Activated naive CD4-positive, alpha-beta T cell treated with anti-CD3 and anti-CD28 coated beads for 36 hours (primary cell): ENCODE measurements at regions of chr11 and their contacts with region 1.

Region 1: GRCh38 chr11:121292495-121293287 is at the start of gene SC5D:
- DNase-seq: peak; percentile 97
- H3K4me3 Mint-ChIP-seq: peak within 1 kb of the TSS; percentile 90
- H3K27ac Mint-ChIP-seq: peak within 1 kb of the TSS; percentile 95
- H3K4me1 Mint-ChIP-seq: peaks cover 32% of the 10 kb centered on the region
- H3K27me3 Mint-ChIP-seq: no peaks in the 10 kb centered on the region
- total RNA-seq, gene SC5D: 29.6 to 31.7 TPM

Region 2: GRCh38 chr11:121309688-121310087 is 17.0 kb after region 1 on chr11:
- CTCF ChIA-PET with region 1: no interaction called
- intact Hi-C with region 1: loop called (anchors 2 kb)
- DNase-seq: no peak
- H3K4me3 Mint-ChIP-seq: no peak overlapping the region
- H3K27ac Mint-ChIP-seq: peak overlapping the region; percentile 42
- H3K4me1 Mint-ChIP-seq: peaks cover 40% of the 10 kb centered on the region
- H3K27me3 Mint-ChIP-seq: no peaks in the 10 kb centered on the region